Activated CD4-positive, alpha-beta memory T cell treated with anti-CD3 and anti-CD28 coated beads for 36 hours (primary cell): ENCODE measurements at regions of chr18 and their contacts with region 1.

Region 1: GRCh38 chr18:59957971-59958595 is 58.3 kb downstream of the PMAIP1 start:
- DNase-seq: peak; percentile 21
- H3K4me3 Mint-ChIP-seq: no peak overlapping the region
- H3K27ac Mint-ChIP-seq: no peak overlapping the region
- H3K4me1 Mint-ChIP-seq: peaks cover 23% of the 10 kb centered on the region
- H3K27me3 Mint-ChIP-seq: peaks cover 5% of the 10 kb centered on the region

Region 2: DNA sequence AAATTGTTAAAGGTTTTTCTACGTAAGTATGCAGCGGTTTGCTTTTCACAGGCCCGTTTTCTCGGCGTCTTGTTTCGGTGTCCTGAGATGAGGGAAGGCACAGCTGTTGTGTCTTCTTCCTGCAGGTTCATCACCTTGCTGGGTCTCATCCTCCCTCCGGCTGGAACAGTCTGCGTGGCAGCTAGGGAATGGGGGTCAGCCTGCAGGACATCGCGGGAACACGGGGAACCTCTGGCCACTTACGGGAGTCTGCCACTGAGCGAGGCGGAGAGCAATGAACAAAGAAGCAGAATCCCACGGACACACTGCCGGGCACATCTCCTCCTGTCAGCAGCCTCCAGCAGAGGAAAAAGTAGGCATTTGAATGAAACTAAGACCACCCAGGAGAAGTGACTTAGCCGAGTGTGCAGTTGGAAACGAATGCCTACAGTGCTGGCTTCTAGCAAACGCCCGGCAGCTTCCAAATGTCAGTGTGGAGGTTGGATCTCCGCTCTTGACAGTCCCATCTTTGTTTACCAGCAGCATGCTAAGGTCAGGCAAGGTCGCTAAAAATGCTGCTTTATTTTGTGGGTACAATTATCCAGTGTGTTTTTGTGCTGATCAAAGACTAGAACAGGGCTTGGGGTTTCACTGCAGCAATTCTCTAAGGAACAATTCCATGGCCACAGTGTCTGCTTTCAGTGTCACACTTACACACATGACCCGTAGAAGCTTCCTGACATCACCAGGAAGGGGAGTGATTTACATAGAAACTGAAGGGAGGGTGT is 928.2 kb before region 1 on chr18:
- CTCF ChIA-PET with region 1: no interaction called
- POLR2A ChIA-PET with region 1: no interaction called
- intact Hi-C with region 1: loop called (anchors 10 kb)
- DNase-seq: no peak
- H3K4me3 Mint-ChIP-seq: no peak overlapping the region
- H3K27ac Mint-ChIP-seq: no peak overlapping the region
- H3K4me1 Mint-ChIP-seq: no peaks in the 10 kb centered on the region
- H3K27me3 Mint-ChIP-seq: peaks cover 5% of the 10 kb centered on the region